Activated naive CD8-positive, alpha-beta T cell treated with anti-CD3 and anti-CD28 coated beads, Interleukin-2, amount 10 ng/mL, durations not matched to agents 7 days and 5 days (primary cell): ENCODE measurements at regions of chrX and their contacts with region 1.

Region 1: GRCh38 chrX:118495061-118495921 is at the start of gene DOCK11:
- DNase-seq: peak; percentile 75
- ATAC-seq: peak; percentile 70
- H3K4me3 Mint-ChIP-seq: peak within 1 kb of the TSS; percentile 99
- H3K27ac Mint-ChIP-seq: peak within 1 kb of the TSS; percentile 99
- H3K4me1 Mint-ChIP-seq: peaks cover 14% of the 10 kb centered on the region
- H3K27me3 Mint-ChIP-seq: no peaks in the 10 kb centered on the region
- total RNA-seq, gene DOCK11: 71.9 to 80.4 TPM

Region 2: GRCh38 chrX:118345401-118346257 is 149.7 kb before region 1 on chrX and contains the start of gene WDR44:
- POLR2A ChIA-PET with region 1: interaction called, 15 read pairs
- DNase-seq: peak; percentile 90
- ATAC-seq: peak; percentile 94
- H3K4me3 Mint-ChIP-seq: peak within 1 kb of the TSS; percentile 98
- H3K27ac Mint-ChIP-seq: peak within 1 kb of the TSS; percentile 97
- H3K4me1 Mint-ChIP-seq: peaks cover 26% of the 10 kb centered on the region
- H3K27me3 Mint-ChIP-seq: no peaks in the 10 kb centered on the region
- total RNA-seq, gene WDR44: 22.7 to 23.1 TPM

Region 3: GRCh38 chrX:118474586-118474985 is 20.7 kb before region 1 on chrX:
- POLR2A ChIA-PET with region 1: no interaction called
- DNase-seq: no peak
- ATAC-seq: no peak
- H3K4me3 Mint-ChIP-seq: no peak overlapping the region
- H3K27ac Mint-ChIP-seq: no peak overlapping the region
- H3K4me1 Mint-ChIP-seq: no peaks in the 10 kb centered on the region
- H3K27me3 Mint-ChIP-seq: no peaks in the 10 kb centered on the region

Region 4: DNA sequence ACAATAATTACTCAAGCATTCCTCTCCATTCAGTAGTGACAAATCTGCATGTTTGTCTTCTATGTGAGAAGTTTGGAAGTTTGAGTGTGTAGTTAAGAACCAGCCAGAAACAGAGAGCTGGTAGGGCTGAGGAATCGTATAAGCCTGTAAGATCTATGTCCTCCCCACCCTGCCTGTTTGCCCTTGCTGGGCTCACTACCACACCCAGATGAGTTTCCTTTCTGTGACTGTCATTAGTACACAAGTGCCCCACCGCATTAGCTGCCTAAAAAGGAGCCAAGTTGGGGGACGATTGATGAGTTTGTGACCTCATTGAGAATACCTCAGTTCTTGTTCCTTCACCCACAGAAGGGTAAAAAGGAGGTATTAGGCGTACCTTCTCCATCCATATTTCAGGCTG is 28.6 kb after region 1 on chrX:
- POLR2A ChIA-PET with region 1: interaction called, 107 read pairs
- DNase-seq: no peak
- ATAC-seq: peak; percentile 78
- H3K4me3 Mint-ChIP-seq: peak overlapping the region; percentile 79
- H3K27ac Mint-ChIP-seq: peak overlapping the region; percentile 92
- H3K4me1 Mint-ChIP-seq: peaks cover 66% of the 10 kb centered on the region
- H3K27me3 Mint-ChIP-seq: no peaks in the 10 kb centered on the region

Region 5: DNA sequence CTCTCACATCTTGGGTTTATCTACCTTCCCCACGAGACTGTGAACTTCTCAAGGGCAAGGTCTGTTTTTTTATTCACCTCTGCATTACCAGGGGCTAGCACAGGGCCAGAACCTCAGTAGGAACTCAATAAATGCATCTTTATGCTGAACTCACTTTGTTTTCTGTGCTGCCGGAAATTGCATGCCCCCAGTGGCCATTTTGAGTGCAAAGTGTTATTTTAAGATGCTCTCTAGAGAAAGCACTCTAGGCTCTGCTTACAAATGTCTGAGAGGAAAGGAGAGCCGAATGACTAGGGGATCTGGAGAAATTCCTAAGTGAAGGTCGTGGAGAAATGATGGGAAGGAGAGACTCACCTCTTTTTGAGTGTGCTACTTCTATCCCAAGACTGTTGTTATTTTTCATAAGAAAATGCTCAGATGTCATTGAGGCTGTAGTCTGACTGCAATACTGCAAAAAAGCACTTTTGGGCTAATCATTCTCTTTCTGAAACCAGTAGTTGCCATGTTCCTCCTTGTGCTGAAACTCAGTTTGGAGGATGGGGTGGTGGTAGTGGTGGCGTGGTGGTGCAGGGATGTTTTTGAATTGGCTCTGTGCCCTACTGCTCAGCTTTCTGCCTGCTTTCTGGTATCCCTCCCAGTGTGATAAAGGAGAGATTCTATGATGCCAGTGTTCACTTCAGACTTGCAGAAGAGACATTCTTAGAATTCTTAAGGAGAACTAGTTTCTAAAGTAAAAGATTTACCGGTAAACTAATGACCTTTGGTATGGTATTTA is 41.6 kb after region 1 on chrX:
- POLR2A ChIA-PET with region 1: interaction called, 107 read pairs
- DNase-seq: no peak
- ATAC-seq: peak; percentile 74
- H3K4me3 Mint-ChIP-seq: peak overlapping the region; percentile 76
- H3K27ac Mint-ChIP-seq: peak overlapping the region; percentile 96
- H3K4me1 Mint-ChIP-seq: peaks cover 36% of the 10 kb centered on the region
- H3K27me3 Mint-ChIP-seq: no peaks in the 10 kb centered on the region